ENCODE measurements at regions of chr7 and their contacts with region 1.

Region 1: GRCh38 chr7:124856299-124856888 is 73.2 kb downstream of the POT1 start:
- DNase-seq: peak; percentile 67
- ATAC-seq: peak; percentile 51
- H3K4me3 ChIP-seq: no peak overlapping the region
- H3K27ac ChIP-seq: no peak overlapping the region
- H3K4me1 ChIP-seq: no peaks in the 10 kb centered on the region
- H3K27me3 ChIP-seq: no peaks in the 10 kb centered on the region
- CTCF ChIP-seq: peak; percentile 81

Region 2: DNA sequence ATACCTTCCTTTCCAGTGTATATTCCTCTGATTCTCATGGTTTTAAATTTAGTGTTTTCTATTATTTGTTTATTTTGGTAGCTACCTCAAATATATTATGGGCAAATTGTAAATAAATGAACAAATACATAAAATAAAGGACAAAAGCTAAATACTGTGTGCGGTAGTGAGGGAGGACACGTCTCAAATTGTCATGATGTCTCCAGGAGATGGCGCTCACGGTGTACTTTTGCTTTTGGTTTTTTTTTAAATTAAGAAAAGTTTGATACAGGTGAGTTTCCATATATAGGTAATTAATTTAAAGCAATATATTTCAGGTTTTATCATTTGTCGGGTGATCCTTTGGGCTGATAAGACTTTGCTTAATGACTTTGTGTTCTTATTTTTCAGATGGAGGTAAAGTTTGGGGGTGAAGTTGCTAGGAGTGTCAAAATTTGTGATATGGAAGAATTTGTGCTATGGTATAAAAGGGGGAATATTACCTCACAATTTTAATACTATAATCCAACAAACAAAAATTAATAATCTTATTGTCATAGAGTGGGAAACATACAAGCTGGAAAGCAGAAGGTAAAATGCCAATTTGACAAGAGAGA is 755.1 kb before region 1 on chr7:
- CTCF ChIA-PET with region 1: no interaction called
- POLR2A ChIA-PET with region 1: no interaction called
- intact Hi-C with region 1: loop called (anchors 5 kb)
- DNase-seq: peak; percentile 52
- ATAC-seq: peak; percentile 31; the same call in 1 of the 2 replicates
- H3K4me3 ChIP-seq: no peak overlapping the region
- H3K27ac ChIP-seq: no peak overlapping the region
- H3K4me1 ChIP-seq: no peaks in the 10 kb centered on the region
- H3K27me3 ChIP-seq: no peaks in the 10 kb centered on the region
- CTCF ChIP-seq: peak; percentile 79

Region 3: DNA sequence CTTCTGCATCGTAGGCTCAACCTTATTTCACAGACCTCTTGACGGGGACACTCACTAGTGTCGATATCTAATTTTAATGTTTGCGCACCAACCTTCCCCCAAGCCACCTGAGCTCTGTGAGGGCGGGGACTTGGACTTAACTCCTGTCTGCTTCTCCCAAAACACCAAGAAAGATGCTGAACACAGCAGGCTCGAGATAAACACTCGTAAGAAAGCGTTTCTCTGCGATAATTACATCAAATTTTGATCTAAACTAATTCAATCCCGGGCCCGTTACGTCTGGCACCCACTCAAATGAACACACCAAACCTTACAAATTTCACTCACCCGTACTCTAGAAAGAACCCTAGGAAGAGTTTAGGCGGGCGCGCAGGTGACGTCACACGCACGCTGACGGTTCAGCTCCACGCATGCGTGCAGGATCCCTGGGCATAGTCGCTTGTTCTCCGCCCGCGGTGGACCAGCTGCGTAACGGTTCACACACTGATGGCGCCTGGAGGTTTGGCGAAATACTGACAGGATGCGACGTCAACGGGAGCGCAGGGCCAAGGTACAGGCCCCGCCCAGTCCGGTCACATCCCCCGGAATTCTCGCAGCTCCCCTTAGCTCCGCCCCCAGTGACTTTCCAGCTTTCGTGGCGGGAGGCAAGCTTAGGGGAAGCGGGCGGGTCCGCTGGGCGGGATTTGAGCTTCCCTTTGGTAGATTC is 73.2 kb after region 1 on chr7 and contains the start of gene POT1:
- CTCF ChIA-PET with region 1: no interaction called
- POLR2A ChIA-PET with region 1: no interaction called
- intact Hi-C with region 1: loop called (anchors 5 kb)
- DNase-seq: peak; percentile 97
- ATAC-seq: peak; percentile 98
- H3K4me3 ChIP-seq: peak within 1 kb of the TSS; percentile 98
- H3K27ac ChIP-seq: peak within 1 kb of the TSS; percentile 50
- H3K4me1 ChIP-seq: peaks cover 8% of the 10 kb centered on the region
- H3K27me3 ChIP-seq: no peaks in the 10 kb centered on the region
- CTCF ChIP-seq: no peak
- total RNA-seq, gene POT1: 18.7 and 20.2 TPM in 2 replicates

Region 4: DNA sequence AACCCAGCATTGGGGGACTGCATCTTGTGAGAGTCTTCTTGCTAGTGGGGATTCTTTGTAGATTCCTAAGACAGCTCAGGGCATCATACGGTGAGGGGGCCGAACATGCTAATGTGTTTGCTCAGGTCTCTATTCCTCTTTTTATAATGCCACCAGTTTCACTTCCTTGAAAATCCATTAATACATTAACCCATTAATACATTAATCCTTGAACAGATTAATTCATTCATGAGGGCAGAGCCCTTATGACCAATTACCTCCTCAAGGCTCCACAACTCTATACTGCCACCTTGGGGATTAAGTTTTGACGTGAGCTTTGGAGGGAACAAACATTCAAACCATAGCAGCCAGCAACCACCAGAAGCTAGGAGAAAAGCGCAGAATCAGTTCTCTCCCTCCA is 140.4 kb after region 1 on chr7:
- CTCF ChIA-PET with region 1: no interaction called
- POLR2A ChIA-PET with region 1: no interaction called
- intact Hi-C with region 1: loop called (anchors 5 kb)
- DNase-seq: peak; percentile 55
- ATAC-seq: peak; percentile 53; the same call in 1 of the 2 replicates
- H3K4me3 ChIP-seq: no peak overlapping the region
- H3K27ac ChIP-seq: no peak overlapping the region
- H3K4me1 ChIP-seq: peaks cover 14% of the 10 kb centered on the region
- H3K27me3 ChIP-seq: no peaks in the 10 kb centered on the region
- CTCF ChIP-seq: peak; percentile 45; the same call in 1 of the 2 replicates

Region 5: GRCh38 chr7:126026421-126027088 is 1170.2 kb after region 1 on chr7:
- CTCF ChIA-PET with region 1: no interaction called
- POLR2A ChIA-PET with region 1: no interaction called
- intact Hi-C with region 1: no loop called
- DNase-seq: peak; percentile 11
- ATAC-seq: peak; percentile 96
- H3K4me3 ChIP-seq: no peak overlapping the region
- H3K27ac ChIP-seq: no peak overlapping the region
- H3K4me1 ChIP-seq: no peaks in the 10 kb centered on the region
- H3K27me3 ChIP-seq: no peaks in the 10 kb centered on the region
- CTCF ChIP-seq: no peak